A549 (cell line): ENCODE measurements at regions of chr22 and their contacts with region 1.

Region 1: DNA sequence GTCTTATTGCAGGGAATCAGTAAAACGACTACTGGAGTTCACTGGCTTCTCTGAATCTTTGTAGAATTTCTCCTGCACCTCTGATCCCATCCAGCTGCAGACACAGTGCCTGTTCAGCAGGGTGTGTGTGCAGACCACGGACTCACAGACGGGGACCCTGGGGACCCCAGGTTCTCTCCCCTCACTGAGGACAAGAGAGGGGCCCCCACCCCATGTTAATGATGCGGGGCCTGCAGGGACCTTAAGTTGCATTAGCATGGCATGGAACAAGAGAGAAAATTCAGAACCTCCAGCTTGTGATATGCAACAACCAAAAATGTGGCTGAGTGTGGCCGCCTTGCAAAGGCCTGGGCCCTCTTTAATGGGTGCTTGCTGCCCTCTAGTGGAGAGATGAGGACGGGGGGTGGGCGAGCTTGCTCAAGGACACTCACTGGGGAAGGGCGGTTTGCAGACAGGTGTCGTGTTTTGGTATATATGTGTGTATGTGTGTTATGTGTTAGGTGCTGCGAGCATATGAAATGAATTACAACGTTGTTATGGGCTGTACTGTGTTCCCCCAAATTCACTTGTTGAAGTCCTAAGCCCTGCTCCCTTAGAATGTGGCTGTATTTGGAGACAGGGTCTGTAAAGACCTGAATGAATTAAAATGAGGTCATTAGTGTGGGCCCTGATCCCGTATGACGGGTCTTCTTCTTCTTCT is 84.4 kb upstream of the SEPTIN5 start:
- DNase-seq: peak; percentile 70 to 84
- ATAC-seq: peak; percentile 85 to 92; a peak in 5 of 6 replicates
- H3K4me3 ChIP-seq: no peak overlapping the region
- H3K27ac ChIP-seq: no peak overlapping the region
- H3K4me1 ChIP-seq: no peaks in the 10 kb centered on the region
- CTCF ChIP-seq: peak; percentile 66
- EP300 ChIP-seq: no peak
- POLR2A ChIP-seq: no peak
- RAD21 ChIP-seq: peak; percentile 88 to 93

Region 2: DNA sequence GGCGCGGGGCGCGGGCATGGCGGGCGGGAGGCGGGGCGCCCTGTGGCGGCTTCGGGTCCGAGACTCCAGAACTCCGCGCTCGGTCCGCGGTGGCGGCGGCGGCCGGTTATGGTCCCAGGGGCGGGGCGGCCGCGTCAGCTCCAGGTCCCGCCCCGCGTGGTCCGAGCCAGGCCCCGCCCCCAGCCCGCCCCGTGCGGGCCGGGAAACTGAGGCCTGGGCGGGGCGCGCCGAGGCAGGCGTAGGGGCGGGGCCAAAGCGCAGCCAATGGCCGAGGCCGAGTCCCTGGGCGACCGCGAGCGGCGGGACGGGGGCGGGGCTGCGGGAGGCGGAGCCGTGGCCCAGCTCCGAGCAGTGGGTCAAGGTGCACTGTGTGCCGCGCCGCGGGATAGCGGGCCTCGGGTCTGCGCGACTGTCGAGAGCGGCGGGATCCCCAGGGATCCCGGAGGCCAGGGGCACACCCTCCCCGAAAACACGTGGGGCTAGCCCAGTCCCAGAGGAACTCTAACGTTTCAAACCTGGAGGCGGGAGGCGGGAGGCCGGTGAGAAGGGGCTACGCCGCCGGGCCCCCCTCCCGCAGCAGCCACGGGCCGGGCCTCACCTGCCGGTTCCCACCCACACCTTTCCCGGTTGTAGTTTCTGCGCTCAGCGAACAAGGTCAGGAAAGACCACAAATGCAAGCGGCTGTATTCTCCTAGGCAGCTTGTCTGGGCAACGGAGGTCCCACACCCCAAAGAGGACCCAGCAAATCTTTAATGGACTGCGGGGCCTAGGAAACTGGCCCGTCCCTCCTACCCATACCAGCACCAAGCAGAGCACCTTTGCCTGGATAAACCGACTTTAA is 451.0 kb before region 1 on chr22 and contains the start of gene SLC25A1:
- CTCF ChIA-PET with region 1: interaction called, 10 read pairs
- POLR2A ChIA-PET with region 1: no interaction called
- DNase-seq: peak; percentile 72 to 83
- ATAC-seq: peak; percentile 69 to 86
- H3K4me3 ChIP-seq: peak within 1 kb of the TSS; percentile 80
- H3K27ac ChIP-seq: peak within 1 kb of the TSS; percentile 93 to 98
- H3K4me1 ChIP-seq: peaks cover 35% of the 10 kb centered on the region
- CTCF ChIP-seq: no peak
- EP300 ChIP-seq: no peak
- POLR2A ChIP-seq: peak; percentile 59
- RAD21 ChIP-seq: no peak
- polyA plus RNA-seq, gene SLC25A1: 11.4 and 14.9 TPM in 2 replicates

Region 3: GRCh38 chr22:19495562-19496323 is 134.1 kb before region 1 on chr22:
- CTCF ChIA-PET with region 1: interaction called, 17 read pairs
- POLR2A ChIA-PET with region 1: no interaction called
- DNase-seq: peak in 1 of 2 experiments; percentile 18
- ATAC-seq: no peak
- H3K4me3 ChIP-seq: no peak overlapping the region
- H3K27ac ChIP-seq: no peak overlapping the region
- H3K4me1 ChIP-seq: no peaks in the 10 kb centered on the region
- CTCF ChIP-seq: no peak
- EP300 ChIP-seq: no peak
- POLR2A ChIP-seq: no peak
- RAD21 ChIP-seq: no peak

Region 4: GRCh38 chr22:19596680-19597398 is 33.0 kb before region 1 on chr22:
- CTCF ChIA-PET with region 1: interaction called, 16 read pairs
- POLR2A ChIA-PET with region 1: no interaction called
- DNase-seq: no peak
- ATAC-seq: no peak
- H3K4me3 ChIP-seq: no peak overlapping the region
- H3K27ac ChIP-seq: no peak overlapping the region
- H3K4me1 ChIP-seq: no peaks in the 10 kb centered on the region
- CTCF ChIP-seq: no peak
- EP300 ChIP-seq: no peak
- POLR2A ChIP-seq: no peak
- RAD21 ChIP-seq: no peak

Region 5: GRCh38 chr22:19641254-19641982 is 11.5 kb after region 1 on chr22:
- CTCF ChIA-PET with region 1: interaction called, 23 read pairs
- POLR2A ChIA-PET with region 1: no interaction called
- DNase-seq: peak; percentile 36 to 64
- ATAC-seq: peak; percentile 90 to 96
- H3K4me3 ChIP-seq: peak overlapping the region; percentile 29
- H3K27ac ChIP-seq: peak overlapping the region; percentile 44 to 72; a peak in 4 of 6 replicates
- H3K4me1 ChIP-seq: no peaks in the 10 kb centered on the region
- CTCF ChIP-seq: peak; percentile 24; the same call in 2 of the 3 replicates
- EP300 ChIP-seq: no peak
- POLR2A ChIP-seq: no peak
- RAD21 ChIP-seq: no peak

Region 6: DNA sequence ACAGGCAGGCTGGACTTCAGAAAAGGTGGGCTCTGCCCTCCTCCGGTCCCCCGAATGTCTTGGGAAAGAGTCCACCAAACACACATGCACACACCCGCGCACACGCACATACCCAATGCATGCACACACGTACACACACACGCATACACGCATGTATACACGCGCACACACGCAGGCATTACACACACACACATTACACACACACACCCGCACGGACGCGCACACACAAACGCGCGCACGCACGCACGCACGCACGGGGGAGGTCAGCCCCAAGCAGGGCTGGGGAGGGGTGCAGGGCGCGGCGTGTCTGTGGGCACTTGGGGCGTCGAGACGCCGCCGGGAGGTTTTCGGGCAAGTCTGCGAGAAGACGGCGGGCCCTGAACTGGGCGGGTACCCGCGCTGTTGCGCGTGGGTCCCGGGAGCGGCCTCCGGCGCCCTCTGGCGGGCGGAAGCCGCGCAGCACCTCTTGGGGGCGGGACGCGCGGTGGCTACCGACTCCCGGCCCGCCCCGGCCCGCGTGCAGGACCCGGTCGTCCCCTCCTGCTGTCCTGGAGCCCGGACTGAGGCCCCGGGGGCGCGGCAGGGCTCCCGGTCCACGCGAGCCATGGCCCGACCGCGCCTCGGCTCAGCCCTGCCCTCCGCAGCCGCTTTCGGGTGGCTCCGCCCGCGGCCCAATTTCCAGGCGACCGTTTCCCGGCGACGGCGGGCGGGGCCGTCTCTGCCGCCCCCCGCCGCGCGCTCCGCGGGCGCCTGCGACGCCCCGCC is 88.0 kb after region 1 on chr22:
- CTCF ChIA-PET with region 1: interaction called, 13 read pairs
- POLR2A ChIA-PET with region 1: no interaction called
- DNase-seq: peak; percentile 55 to 65
- ATAC-seq: peak; percentile 67 to 88
- H3K4me3 ChIP-seq: peak overlapping the region; percentile 45
- H3K27ac ChIP-seq: peak overlapping the region; percentile 80 to 92
- H3K4me1 ChIP-seq: peaks cover 9% of the 10 kb centered on the region; the same call in 1 of the 3 replicates
- CTCF ChIP-seq: peak; percentile 82
- EP300 ChIP-seq: no peak
- POLR2A ChIP-seq: no peak
- RAD21 ChIP-seq: peak; percentile 46 to 79; a peak in 4 of 5 replicates

Region 7: GRCh38 chr22:19800761-19801244 is 170.9 kb after region 1 on chr22:
- CTCF ChIA-PET with region 1: no interaction called
- POLR2A ChIA-PET with region 1: no interaction called
- DNase-seq: peak in 1 of 2 experiments; percentile 39
- ATAC-seq: peak; percentile 74 to 85; a peak in 5 of 6 replicates
- H3K4me3 ChIP-seq: no peak overlapping the region
- H3K27ac ChIP-seq: no peak overlapping the region
- H3K4me1 ChIP-seq: peaks cover under 1% of the 10 kb centered on the region; the same call in 1 of the 3 replicates
- CTCF ChIP-seq: no peak
- EP300 ChIP-seq: no peak
- POLR2A ChIP-seq: no peak
- RAD21 ChIP-seq: peak in 1 of 2 experiments; percentile 16; a peak in 1 of 5 replicates